Naive thymus-derived CD4-positive, alpha-beta T cell (primary cell): ENCODE measurements at regions of chr4 and their contacts with region 1.

Region 1: DNA sequence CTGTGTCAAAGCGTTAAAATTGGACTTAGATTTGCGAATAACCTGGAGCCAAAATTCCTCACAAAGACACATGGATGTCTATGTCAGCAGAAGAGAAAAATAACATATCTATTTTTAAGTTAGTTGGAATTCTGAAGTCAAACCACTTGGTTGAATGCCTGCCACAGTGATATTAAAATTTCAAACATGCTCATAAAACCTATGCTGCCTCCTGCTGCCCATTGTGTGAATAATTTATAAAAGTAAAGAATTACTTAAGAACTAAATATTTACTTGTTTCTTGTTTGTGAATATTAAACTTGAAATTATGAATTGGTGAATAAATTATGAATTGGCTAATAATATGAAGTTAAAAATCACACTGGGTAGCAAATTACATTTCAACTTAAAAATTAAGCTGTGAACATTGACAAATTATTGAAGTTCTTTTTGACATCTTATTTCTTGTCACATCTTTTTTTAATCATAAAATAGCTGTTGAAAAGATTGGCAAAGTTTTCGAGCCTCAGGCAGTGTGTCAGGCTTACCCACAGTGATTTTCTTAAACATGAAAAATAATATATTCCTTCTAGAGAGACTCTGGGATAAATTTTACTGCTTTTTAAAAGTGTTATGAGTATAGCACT is 35.4 kb downstream of the FABP2 start:
- DNase-seq: peak in 7 of 9 donors; percentile 28 to 52 (median 42)
- ATAC-seq: peak; percentile 56
- H3K4me3 ChIP-seq: no peak overlapping the region
- H3K4me3 Mint-ChIP-seq: no peak overlapping the region
- H3K27ac ChIP-seq: no peak overlapping the region
- H3K27ac Mint-ChIP-seq: no peak overlapping the region
- H3K4me1 ChIP-seq: peaks cover 0 to 3% of the 10 kb centered on the region in 2 donors
- H3K4me1 Mint-ChIP-seq: peaks cover 13 to 34% (median 26%) of the 10 kb centered on the region in 7 donors
- H3K27me3 ChIP-seq: no peaks in the 10 kb centered on the region
- H3K27me3 Mint-ChIP-seq: no peaks in the 10 kb centered on the region

Region 2: DNA sequence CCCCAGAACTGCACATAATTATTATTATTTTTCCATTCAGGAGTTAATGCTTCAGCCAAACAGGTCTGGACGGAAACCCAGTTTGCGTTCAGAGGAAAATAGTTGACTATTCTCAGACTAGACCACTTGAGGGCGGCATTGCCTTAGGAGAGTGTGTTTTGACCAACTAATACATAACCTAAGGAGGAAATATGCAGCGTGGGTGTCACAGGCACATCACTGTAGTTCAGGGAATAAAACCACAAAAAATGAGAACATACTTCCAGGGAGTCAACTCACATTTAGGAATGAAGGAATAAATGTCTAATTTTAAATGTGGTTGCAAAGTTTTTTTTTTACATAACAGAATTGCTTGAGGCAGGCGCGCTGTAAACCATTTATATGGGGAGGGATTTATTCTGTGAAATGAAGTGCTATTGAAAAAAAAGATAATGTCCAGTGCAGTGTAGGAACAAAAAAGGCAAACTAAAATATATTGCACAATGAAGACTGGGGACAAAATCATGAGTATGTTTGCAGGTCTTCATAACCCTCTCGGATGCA is 304.6 kb before region 1 on chr4:
- CTCF ChIA-PET with region 1: interaction called, 3 read pairs
- POLR2A ChIA-PET with region 1: no interaction called
- intact Hi-C with region 1: loop called in 1 of 2 experiments (anchors 1 kb)
- DNase-seq: peak in 8 of 9 donors; percentile 14 to 55 (median 38)
- ATAC-seq: peak; percentile 88
- H3K4me3 ChIP-seq: no peak overlapping the region
- H3K4me3 Mint-ChIP-seq: no peak overlapping the region
- H3K27ac ChIP-seq: no peak overlapping the region
- H3K27ac Mint-ChIP-seq: no peak overlapping the region
- H3K4me1 ChIP-seq: no peaks in the 10 kb centered on the region
- H3K4me1 Mint-ChIP-seq: peaks cover 0 to 2% (median 0%) of the 10 kb centered on the region in 7 donors
- H3K27me3 ChIP-seq: no peaks in the 10 kb centered on the region
- H3K27me3 Mint-ChIP-seq: peaks cover 0 to 18% (median 0%) of the 10 kb centered on the region in 5 donors

Region 3: GRCh38 chr4:119041951-119042560 is 244.4 kb before region 1 on chr4:
- CTCF ChIA-PET with region 1: interaction called, 29 read pairs
- POLR2A ChIA-PET with region 1: no interaction called
- intact Hi-C with region 1: loop called (anchors 1 kb)
- DNase-seq: peak in 7 of 9 donors; percentile 30 to 72 (median 61)
- ATAC-seq: peak; percentile 94
- H3K4me3 ChIP-seq: no peak overlapping the region
- H3K4me3 Mint-ChIP-seq: peak overlapping the region in 1 of 10 donors; percentile 25
- H3K27ac ChIP-seq: no peak overlapping the region
- H3K27ac Mint-ChIP-seq: no peak overlapping the region
- H3K4me1 ChIP-seq: no peaks in the 10 kb centered on the region
- H3K4me1 Mint-ChIP-seq: peaks cover 0 to 12% (median 0%) of the 10 kb centered on the region in 7 donors
- H3K27me3 ChIP-seq: no peaks in the 10 kb centered on the region
- H3K27me3 Mint-ChIP-seq: peaks cover 0 to 3% (median 0%) of the 10 kb centered on the region in 5 donors

Region 4: DNA sequence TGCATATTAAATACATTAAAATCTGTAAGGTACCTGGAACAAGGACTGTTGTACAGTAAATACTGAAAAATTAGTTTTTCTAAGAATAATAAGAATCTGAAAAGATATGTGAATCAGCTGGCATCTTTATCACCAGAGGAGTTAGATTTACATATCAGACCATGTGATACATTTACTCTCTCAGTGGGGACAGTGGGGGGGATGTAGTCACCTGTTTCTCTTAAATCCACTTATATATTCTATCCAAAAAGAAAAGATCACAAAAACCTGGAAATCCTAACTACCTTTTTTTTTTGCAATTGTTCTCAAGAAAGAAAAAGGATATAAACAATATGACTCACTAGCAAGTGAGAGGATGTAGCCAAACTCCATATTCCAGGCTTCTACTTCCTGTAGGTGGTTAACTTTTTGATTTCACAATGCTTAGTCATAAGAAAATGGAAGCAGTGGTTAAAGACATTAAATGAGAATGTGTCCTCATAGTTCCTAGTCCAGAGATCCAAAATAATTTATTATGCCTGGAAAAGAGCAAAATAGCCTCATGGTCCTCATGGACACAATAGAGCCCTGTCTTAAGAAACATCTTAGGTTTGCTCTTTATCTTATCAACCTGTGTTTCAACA is 173.3 kb before region 1 on chr4:
- CTCF ChIA-PET with region 1: no interaction called
- POLR2A ChIA-PET with region 1: no interaction called
- intact Hi-C with region 1: no loop called
- DNase-seq: no peak
- ATAC-seq: peak; percentile 73
- H3K4me3 ChIP-seq: no peak overlapping the region
- H3K4me3 Mint-ChIP-seq: no peak overlapping the region
- H3K27ac ChIP-seq: no peak overlapping the region
- H3K27ac Mint-ChIP-seq: no peak overlapping the region
- H3K4me1 ChIP-seq: no peaks in the 10 kb centered on the region
- H3K4me1 Mint-ChIP-seq: peaks cover 0 to 10% (median 4%) of the 10 kb centered on the region in 7 donors
- H3K27me3 ChIP-seq: no peaks in the 10 kb centered on the region
- H3K27me3 Mint-ChIP-seq: peaks cover 0 to 9% (median 6%) of the 10 kb centered on the region in 5 donors

Region 5: GRCh38 chr4:119238068-119238722 is 48.3 kb before region 1 on chr4:
- CTCF ChIA-PET with region 1: no interaction called
- POLR2A ChIA-PET with region 1: no interaction called
- intact Hi-C with region 1: loop called in 1 of 2 experiments (anchors 5 kb)
- DNase-seq: peak in 1 of 9 donors; percentile 24
- ATAC-seq: no peak
- H3K4me3 ChIP-seq: no peak overlapping the region
- H3K4me3 Mint-ChIP-seq: peak overlapping the region in 3 of 10 donors; percentile 24 to 37 (median 27)
- H3K27ac ChIP-seq: no peak overlapping the region
- H3K27ac Mint-ChIP-seq: peak overlapping the region in 4 of 9 donors; percentile 53 to 67 (median 61)
- H3K4me1 ChIP-seq: peaks cover 0 to 9% of the 10 kb centered on the region in 2 donors
- H3K4me1 Mint-ChIP-seq: peaks cover 17 to 60% (median 35%) of the 10 kb centered on the region in 7 donors
- H3K27me3 ChIP-seq: no peaks in the 10 kb centered on the region
- H3K27me3 Mint-ChIP-seq: no peaks in the 10 kb centered on the region

Region 6: DNA sequence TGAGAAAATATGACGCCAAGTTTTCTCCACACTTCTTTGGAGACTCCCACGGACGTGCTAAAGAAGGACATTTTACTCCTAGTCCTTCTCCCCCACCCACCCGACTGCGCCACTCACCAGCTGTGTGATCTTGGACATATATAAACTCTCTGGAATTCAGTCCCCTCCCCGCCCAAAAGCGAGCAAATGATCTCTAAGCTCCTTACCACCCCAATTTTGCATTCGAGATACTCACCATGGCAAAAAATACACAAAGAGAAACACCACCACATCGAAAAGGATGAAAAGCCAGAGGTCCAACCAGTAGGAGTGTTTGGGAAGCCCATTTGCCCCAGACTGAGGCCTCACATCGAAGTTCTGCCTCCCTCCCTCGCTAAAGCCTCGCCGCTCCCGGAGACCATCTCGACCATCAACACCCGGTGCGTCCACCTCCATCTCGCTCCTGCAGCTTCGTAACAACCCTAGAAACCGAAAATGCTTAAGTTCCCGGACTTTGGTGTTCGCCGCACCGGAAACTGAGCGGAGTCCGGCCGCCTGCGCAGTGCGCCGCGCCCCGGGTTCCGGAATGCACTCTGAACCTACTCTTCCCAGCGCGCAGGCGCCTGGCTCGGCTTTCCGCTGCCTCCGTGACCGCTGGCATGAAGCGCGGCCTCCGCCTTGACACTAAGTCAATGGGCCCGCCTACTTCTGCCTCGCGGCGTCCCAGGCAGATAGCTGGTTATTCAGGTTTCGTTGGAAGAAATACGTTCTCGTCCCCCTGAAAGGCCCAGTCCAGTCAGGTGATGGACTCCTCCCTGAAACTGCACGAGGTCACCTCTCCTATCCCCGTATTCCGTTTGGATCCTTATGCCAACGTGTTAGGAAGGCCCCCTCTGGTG is 13.8 kb after region 1 on chr4:
- CTCF ChIA-PET with region 1: interaction called, 3 read pairs
- POLR2A ChIA-PET with region 1: interaction called, 10 read pairs
- intact Hi-C with region 1: loop called in 1 of 2 experiments (anchors 1 kb)
- DNase-seq: peak; percentile 84 to 94 (median 88)
- ATAC-seq: peak; percentile 97
- H3K4me3 ChIP-seq: peak overlapping the region; percentile 93
- H3K4me3 Mint-ChIP-seq: peak overlapping the region; percentile 92 to 100 (median 96)
- H3K27ac ChIP-seq: peak overlapping the region; percentile 90
- H3K27ac Mint-ChIP-seq: peak overlapping the region; percentile 98 to 100 (median 100)
- H3K4me1 ChIP-seq: peaks cover 5 to 22% of the 10 kb centered on the region in 2 donors
- H3K4me1 Mint-ChIP-seq: peaks cover 16 to 49% (median 43%) of the 10 kb centered on the region in 7 donors
- H3K27me3 ChIP-seq: no peaks in the 10 kb centered on the region
- H3K27me3 Mint-ChIP-seq: peaks cover 0 to 5% (median 0%) of the 10 kb centered on the region in 5 donors